ENCODE measurements at regions of chr6 and their contacts with region 1.

Region 1: DNA sequence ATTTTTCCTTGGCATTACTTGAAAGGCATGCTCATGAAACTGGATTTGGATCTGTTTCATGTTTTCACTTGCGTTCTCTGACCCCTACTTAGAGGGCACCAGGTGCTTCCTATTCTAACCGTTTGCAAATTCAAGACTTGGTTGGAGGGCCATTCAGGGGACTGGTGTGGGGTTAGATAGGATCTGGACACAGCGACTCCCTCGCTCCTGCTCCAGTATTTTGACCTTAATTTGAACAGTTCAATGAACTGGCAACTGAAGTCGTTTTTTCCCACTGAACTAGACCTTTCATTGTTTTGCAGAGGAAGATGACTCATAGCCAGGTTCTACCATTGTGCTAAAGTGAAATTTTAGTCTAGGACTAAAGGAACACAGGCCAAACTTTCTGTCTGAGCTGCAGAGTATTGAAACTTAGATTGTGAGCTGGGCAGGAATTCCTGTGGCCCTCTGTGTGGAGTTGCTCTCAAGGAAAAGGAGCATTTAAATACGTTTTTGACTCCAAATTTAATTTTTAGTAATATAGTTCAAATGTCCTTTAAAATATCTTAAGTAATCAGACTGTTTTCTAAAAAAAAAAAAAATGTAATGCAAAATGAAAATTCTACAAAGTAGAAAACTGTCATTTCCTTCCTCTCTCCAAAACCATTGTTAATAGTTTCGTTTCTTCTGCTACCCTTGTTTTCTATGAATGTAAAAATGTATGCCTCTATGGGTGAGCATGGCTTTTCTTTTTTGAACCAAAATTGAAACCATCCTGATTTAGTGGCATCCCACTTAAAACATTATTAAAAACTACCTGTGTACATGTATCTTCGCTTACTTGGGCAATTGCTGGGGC is 64.8 kb downstream of the UTRN start:
- DNase-seq: peak; percentile 56
- ATAC-seq: peak; percentile 56
- H3K4me3 ChIP-seq: peak overlapping the region in 4 of 5 experiments; percentile 9 to 55 (median 46)
- H3K4me3 Mint-ChIP-seq: peak overlapping the region; percentile 83
- H3K27ac ChIP-seq: peak overlapping the region; percentile 79 to 80
- H3K27ac Mint-ChIP-seq: peak overlapping the region; percentile 96
- H3K4me1 ChIP-seq: peaks cover 85 to 95% of the 10 kb centered on the region in 2 donors
- H3K4me1 Mint-ChIP-seq: peaks cover 85% of the 10 kb centered on the region
- H3K27me3 ChIP-seq: no peaks in the 10 kb centered on the region
- H3K27me3 Mint-ChIP-seq: no peaks in the 10 kb centered on the region
- CTCF ChIP-seq: no peak

Region 2: GRCh38 chr6:144265390-144265789 is 84.5 kb before region 1 on chr6:
- CTCF ChIA-PET with region 1: interaction called, 3 read pairs
- POLR2A ChIA-PET with region 1: no interaction called
- intact Hi-C with region 1: loop called (anchors 5 kb)
- DNase-seq: peak; percentile 71
- ATAC-seq: peak; percentile 91
- H3K4me3 ChIP-seq: no peak overlapping the region
- H3K4me3 Mint-ChIP-seq: peak overlapping the region; percentile 29
- H3K27ac ChIP-seq: no peak overlapping the region
- H3K27ac Mint-ChIP-seq: no peak overlapping the region
- H3K4me1 ChIP-seq: peaks cover 17% of the 10 kb centered on the region in 2 donors
- H3K4me1 Mint-ChIP-seq: peaks cover 20% of the 10 kb centered on the region
- H3K27me3 ChIP-seq: no peaks in the 10 kb centered on the region
- H3K27me3 Mint-ChIP-seq: no peaks in the 10 kb centered on the region
- CTCF ChIP-seq: no peak

Region 3: GRCh38 chr6:144334131-144334708 is 15.7 kb before region 1 on chr6:
- CTCF ChIA-PET with region 1: interaction called, 3 read pairs
- POLR2A ChIA-PET with region 1: interaction called, 7 read pairs
- intact Hi-C with region 1: loop called (anchors 1 kb)
- DNase-seq: peak; percentile 92
- ATAC-seq: peak; percentile 76
- H3K4me3 ChIP-seq: peak overlapping the region in 4 of 5 experiments; percentile 34 to 53 (median 36)
- H3K4me3 Mint-ChIP-seq: peak overlapping the region; percentile 82
- H3K27ac ChIP-seq: peak overlapping the region; percentile 82 to 94
- H3K27ac Mint-ChIP-seq: peak overlapping the region; percentile 94
- H3K4me1 ChIP-seq: peaks cover 56 to 61% of the 10 kb centered on the region in 2 donors
- H3K4me1 Mint-ChIP-seq: peaks cover 73% of the 10 kb centered on the region
- H3K27me3 ChIP-seq: no peaks in the 10 kb centered on the region
- H3K27me3 Mint-ChIP-seq: no peaks in the 10 kb centered on the region
- CTCF ChIP-seq: no peak

Region 4: GRCh38 chr6:144394210-144394609 is 44.3 kb after region 1 on chr6:
- CTCF ChIA-PET with region 1: no interaction called
- POLR2A ChIA-PET with region 1: no interaction called
- intact Hi-C with region 1: loop called (anchors 5 kb)
- DNase-seq: peak; percentile 9
- ATAC-seq: peak; percentile 51
- H3K4me3 ChIP-seq: no peak overlapping the region
- H3K4me3 Mint-ChIP-seq: no peak overlapping the region
- H3K27ac ChIP-seq: no peak overlapping the region
- H3K27ac Mint-ChIP-seq: no peak overlapping the region
- H3K4me1 ChIP-seq: peaks cover 0 to 8% of the 10 kb centered on the region in 2 donors
- H3K4me1 Mint-ChIP-seq: peaks cover 28% of the 10 kb centered on the region
- H3K27me3 ChIP-seq: no peaks in the 10 kb centered on the region
- H3K27me3 Mint-ChIP-seq: no peaks in the 10 kb centered on the region
- CTCF ChIP-seq: no peak

Measured in B cell (primary cell).